ENCODE measurements at regions of chr5 and their contacts with region 1.

Region 1: GRCh38 chr5:39005566-39006232 is 68.5 kb downstream of the RICTOR start:
- DNase-seq: no peak
- H3K4me3 ChIP-seq: no peak overlapping the region
- H3K27ac ChIP-seq: no peak overlapping the region
- H3K4me1 ChIP-seq: peaks cover 0 to 8% (median 2%) of the 10 kb centered on the region in 4 donors
- H3K27me3 ChIP-seq: no peaks in the 10 kb centered on the region
- CTCF ChIP-seq: peak in 1 of 4 experiments; percentile 22
- EP300 ChIP-seq: no peak
- POLR2A ChIP-seq: no peak

Region 2: DNA sequence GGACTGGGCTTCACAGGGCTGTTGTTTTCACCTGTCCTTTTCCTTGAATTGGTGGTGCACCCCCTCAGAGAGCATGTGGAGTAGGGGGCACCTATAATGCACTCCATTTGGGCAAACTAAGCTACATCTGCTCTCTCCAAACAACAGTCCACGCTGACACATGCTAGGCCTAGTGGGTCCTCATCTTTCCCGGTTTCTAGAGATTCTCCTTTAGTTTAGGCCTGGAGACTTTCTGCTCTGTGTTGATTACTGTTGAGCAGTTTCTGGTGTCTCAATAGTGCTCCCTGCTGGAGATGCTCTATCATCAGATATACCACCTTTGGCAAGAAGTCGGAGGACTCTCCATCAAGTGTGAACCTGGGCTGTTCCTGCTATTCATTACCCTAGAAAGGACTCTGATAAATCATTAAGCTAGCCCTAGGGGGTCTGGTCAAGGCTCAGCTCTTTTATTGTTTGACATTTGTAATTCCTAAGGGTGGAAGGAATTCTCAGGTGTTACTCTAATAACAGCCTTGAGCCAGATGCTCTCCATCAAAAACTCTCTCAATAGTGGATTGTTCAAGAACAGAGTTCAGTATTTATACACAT is 277.6 kb after region 1 on chr5:
- intact Hi-C with region 1: loop called (anchors 5 kb)
- DNase-seq: no peak
- H3K4me3 ChIP-seq: no peak overlapping the region
- H3K27ac ChIP-seq: no peak overlapping the region
- H3K4me1 ChIP-seq: no peaks in the 10 kb centered on the region
- H3K27me3 ChIP-seq: no peaks in the 10 kb centered on the region
- CTCF ChIP-seq: peak in 3 of 4 experiments; percentile 29 to 51 (median 42)
- EP300 ChIP-seq: no peak
- POLR2A ChIP-seq: no peak